Heart right ventricle (tissue), 16 donors: ENCODE measurements at regions of chr1 and their contacts with region 1.

Region 1: DNA sequence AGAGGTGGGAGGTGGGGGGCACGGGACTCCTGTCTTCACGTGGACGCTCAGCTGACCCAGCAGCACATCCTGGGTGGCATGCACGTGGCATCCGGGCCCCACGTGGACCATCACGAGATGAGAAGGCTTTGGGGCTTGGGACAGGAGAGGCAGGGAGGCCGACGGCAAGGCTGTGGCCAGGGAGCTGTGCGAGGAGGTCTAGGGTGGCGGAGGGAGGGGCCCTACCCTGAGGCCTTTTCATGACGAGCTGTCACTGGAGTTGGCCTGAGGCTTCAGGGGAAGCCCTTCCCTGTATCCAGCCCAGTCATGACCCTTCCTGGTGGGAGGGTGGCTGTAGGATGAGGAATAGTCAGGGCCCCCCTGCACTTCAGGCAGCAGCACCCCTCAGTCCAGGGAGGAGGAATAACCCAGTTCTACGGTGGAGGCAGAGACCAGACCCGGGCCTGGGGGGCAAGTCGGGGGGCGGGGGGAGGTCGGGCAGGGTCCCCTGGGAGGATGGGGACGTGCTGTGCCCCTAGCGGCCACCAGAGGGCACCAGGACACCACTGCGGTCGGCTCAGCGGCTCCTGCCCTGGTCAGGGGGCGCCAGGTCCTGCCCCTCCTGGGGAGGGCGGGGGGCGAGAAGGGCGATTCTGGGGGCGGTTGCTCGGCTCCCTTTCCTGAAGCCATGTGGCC is 2.0 kb upstream of the PERM1 start:
- DNase-seq: peak; percentile 48 to 67
- ATAC-seq: peak in 1 of 8 donors; percentile 4
- H3K4me3 ChIP-seq: peak overlapping the region in 5 of 10 donors; percentile 23 to 39 (median 32)
- H3K27ac ChIP-seq: peak overlapping the region in 2 of 10 donors; percentile 87 to 96
- H3K4me1 ChIP-seq: peaks cover 0 to 41% (median 3%) of the 10 kb centered on the region in 9 donors
- H3K27me3 ChIP-seq: peaks cover 0 to 31% (median 7%) of the 10 kb centered on the region in 7 donors
- CTCF ChIP-seq: peak; percentile 92 to 98 (median 94)

Region 2: GRCh38 chr1:1059494-1060280 is 75.8 kb after region 1 on chr1:
- intact Hi-C with region 1: loop called in 9 of 10 experiments (anchors 1 to 5 kb)
- DNase-seq: peak; percentile 83 to 91
- ATAC-seq: peak; percentile 82 to 93 (median 87)
- H3K4me3 ChIP-seq: peak overlapping the region; percentile 24 to 64 (median 58)
- H3K27ac ChIP-seq: no peak overlapping the region
- H3K4me1 ChIP-seq: peaks cover 4 to 38% (median 28%) of the 10 kb centered on the region in 9 donors
- H3K27me3 ChIP-seq: peaks cover 22 to 80% (median 69%) of the 10 kb centered on the region in 7 donors
- CTCF ChIP-seq: peak in 2 of 9 donors; percentile 2 to 3

Region 3: GRCh38 chr1:1069061-1069708 is 85.2 kb after region 1 on chr1:
- intact Hi-C with region 1: loop called in 4 of 10 experiments (anchors 5 kb)
- DNase-seq: peak; percentile 38 to 77
- ATAC-seq: peak; percentile 45 to 72 (median 58)
- H3K4me3 ChIP-seq: peak overlapping the region in 9 of 10 donors; percentile 35 to 57 (median 47)
- H3K27ac ChIP-seq: no peak overlapping the region
- H3K4me1 ChIP-seq: peaks cover 4 to 23% (median 15%) of the 10 kb centered on the region in 9 donors
- H3K27me3 ChIP-seq: peaks cover 26 to 76% (median 66%) of the 10 kb centered on the region in 7 donors
- CTCF ChIP-seq: no peak